WTC11 (cell line): ENCODE measurements at regions of chr12 and their contacts with region 1.

Region 1: GRCh38 chr12:48924617-48925303 is 532 bp downstream of the FKBP11 start:
- DNase-seq: peak; percentile 69
- ATAC-seq: peak; percentile 69
- H3K4me3 Mint-ChIP-seq: peak overlapping the region; percentile 82
- H3K27ac Mint-ChIP-seq: peak overlapping the region; percentile 80
- H3K4me1 Mint-ChIP-seq: peaks cover 15% of the 10 kb centered on the region
- H3K27me3 Mint-ChIP-seq: no peaks in the 10 kb centered on the region; the same call in 1 of the 2 replicates
- CTCF ChIP-seq: 0 out of 2 replicates have a peak, but pooled peaks have one; percentile 15

Region 2: DNA sequence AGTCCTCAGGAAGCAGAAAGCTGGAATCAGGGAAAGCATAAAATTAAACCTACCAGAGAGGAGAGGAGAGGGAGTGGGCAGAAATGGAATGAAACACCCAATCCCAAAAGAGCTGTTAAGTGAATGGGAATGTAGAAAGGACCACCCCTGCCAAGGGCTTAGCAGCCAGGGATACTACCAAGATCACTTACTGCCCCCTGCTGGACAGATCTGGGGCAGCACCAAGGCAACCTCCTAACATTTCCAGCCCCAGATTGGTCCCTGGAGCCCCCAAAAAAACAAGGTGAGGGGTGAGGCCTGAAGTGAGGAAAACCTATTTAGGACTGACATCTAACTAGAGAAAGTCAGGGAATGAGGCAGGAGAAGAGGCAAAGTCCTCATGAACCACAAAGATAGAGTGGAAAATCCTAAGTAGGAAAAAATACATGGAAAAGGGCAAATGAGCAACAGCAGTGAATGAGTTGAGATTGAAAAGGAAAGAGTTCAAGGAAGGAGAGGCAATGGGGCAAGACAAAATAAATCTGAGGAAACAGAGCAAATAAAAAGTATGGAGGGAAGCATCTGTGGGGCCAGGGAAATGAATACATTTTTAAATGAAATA is 11.7 kb after region 1 on chr12:
- CTCF ChIA-PET with region 1: interaction called, 40 read pairs
- POLR2A ChIA-PET with region 1: no interaction called
- DNase-seq: peak; percentile 89
- ATAC-seq: peak; percentile 88
- H3K4me3 Mint-ChIP-seq: no peak overlapping the region
- H3K27ac Mint-ChIP-seq: peak overlapping the region; percentile 46
- H3K4me1 Mint-ChIP-seq: no peaks in the 10 kb centered on the region
- H3K27me3 Mint-ChIP-seq: no peaks in the 10 kb centered on the region
- CTCF ChIP-seq: peak; percentile 70

Region 3: DNA sequence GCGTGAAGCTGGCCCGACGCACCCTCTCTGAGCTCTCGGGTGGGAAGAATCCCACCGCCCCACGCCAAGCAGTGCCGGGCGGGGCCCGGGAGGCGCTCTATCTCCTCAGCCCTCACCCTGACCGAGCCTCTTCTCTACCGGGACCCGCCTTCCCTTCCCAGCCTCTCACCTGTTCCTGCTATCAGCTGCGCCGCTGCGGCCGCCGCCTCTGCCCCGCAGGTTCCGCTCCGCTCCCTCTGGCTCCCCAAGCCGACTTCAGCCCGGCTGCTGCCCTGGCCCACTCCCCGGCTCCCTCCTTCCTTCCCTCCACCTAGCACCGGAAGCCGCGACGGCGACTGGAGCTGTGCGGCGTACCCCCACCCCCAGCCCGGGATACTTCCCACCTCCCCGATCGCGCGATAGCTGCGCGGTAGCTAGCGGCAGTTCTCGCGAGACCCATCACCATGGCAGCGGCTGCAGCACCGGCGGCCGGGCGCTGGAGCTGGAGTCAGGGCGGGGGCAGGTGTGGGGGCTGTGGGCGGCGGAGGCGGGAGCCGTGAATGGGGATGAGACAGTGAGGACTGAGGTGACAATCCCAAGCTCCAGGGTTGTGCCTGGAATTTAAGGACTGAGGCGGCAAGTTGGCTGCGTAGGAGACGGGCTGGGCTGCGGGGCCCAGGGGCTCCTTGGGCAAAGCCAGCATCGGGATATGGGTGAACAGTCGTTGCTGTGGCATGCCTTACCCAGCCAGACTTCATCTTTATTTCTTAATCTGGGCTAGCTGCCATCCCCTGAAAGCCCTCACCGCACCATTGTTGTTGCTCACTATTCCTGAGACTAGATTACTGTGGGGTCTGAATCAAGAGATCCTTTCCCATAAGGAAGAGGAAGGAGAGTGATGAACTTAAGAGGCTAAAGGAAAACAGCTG is 32.6 kb after region 1 on chr12 and contains the start of gene ARF3:
- CTCF ChIA-PET with region 1: interaction called, 7 read pairs
- POLR2A ChIA-PET with region 1: interaction called, 10 read pairs
- DNase-seq: peak; percentile 98
- ATAC-seq: peak; percentile 89
- H3K4me3 Mint-ChIP-seq: peak within 1 kb of the TSS; percentile 95
- H3K27ac Mint-ChIP-seq: peak within 1 kb of the TSS; percentile 97
- H3K4me1 Mint-ChIP-seq: peaks cover 31% of the 10 kb centered on the region
- H3K27me3 Mint-ChIP-seq: peaks cover 7% of the 10 kb centered on the region; the same call in 1 of the 2 replicates
- CTCF ChIP-seq: no peak
- total RNA-seq, gene ARF3: 238 to 256 TPM (median 248 TPM) in 3 replicates